ENCODE measurements at regions of chr17 and their contacts with region 1.

Region 1: GRCh38 chr17:43683928-43684653 is 22.4 kb upstream of the MEOX1 start:
- DNase-seq: no peak
- ATAC-seq: no peak
- H3K4me3 Mint-ChIP-seq: no peak overlapping the region
- H3K27ac Mint-ChIP-seq: no peak overlapping the region
- H3K4me1 Mint-ChIP-seq: no peaks in the 10 kb centered on the region
- H3K27me3 Mint-ChIP-seq: peaks cover 4% of the 10 kb centered on the region

Region 2: DNA sequence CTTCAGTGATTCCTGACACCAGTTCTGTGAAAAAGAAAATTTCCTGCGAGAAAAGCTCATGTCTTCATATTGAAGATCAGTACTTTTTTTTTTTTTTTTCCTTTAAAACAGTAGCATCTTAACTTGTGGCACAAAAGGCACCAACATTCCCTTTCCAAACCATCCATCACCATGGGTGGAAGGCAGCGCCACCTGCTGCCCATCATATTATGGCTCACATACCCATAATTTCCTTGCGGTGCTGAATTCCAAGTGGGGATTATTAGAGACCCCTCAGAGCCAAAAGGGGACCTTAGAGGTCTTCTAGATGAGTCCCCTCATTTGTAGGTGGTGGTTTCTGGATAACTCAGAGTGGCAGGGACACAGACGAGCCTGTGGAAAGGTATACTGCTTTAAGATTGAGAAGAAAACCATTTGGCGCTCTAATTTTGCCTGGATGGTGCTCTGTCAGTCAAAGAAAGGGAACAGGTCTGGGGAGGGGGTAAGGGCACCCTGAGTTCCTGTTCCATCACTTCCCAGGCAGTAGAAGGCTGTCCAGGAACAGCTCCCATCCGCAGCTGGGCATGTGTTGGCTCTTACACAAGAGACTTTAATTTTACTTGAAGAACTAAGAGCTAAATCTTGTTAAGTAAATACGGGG is 82.4 kb after region 1 on chr17:
- CTCF ChIA-PET with region 1: interaction called, 12 read pairs
- POLR2A ChIA-PET with region 1: interaction called, 5 read pairs
- intact Hi-C with region 1: no loop called
- DNase-seq: peak; percentile 73
- ATAC-seq: no peak
- H3K4me3 Mint-ChIP-seq: no peak overlapping the region
- H3K27ac Mint-ChIP-seq: no peak overlapping the region
- H3K4me1 Mint-ChIP-seq: no peaks in the 10 kb centered on the region
- H3K27me3 Mint-ChIP-seq: no peaks in the 10 kb centered on the region

Region 3: DNA sequence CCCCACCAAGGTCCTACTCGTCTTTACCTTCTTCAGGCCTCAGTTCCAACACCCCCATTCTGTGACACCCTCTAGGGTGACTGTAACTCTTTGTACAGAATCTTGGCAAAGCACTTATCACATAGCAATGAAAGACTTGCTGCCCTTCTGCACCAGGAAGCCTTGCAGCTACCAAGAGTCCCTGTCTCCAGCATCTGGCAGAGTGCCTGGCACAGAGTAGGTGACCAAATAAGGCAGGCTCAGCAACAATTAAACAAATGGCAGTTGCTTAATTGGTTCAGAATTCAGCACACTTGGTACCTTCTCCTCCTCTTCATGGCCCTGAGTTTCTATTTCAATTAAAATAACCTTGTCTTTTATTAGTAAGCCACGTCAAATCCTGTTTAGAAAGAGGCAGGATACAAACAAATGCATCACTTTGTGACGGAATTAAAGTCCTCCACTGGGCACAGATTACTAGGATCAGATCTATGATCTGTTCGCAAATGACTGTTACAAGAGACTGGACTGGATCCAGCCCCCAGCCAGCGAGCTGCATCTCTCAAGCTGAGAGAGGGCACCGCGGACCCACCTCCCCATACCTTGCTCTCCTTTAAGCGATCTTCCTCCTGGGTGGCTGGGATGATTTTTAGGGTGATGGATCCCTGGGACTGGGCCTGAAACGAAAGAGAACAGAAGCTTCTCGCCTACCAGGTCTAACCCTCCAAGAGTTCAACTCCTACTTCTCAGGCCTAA is 139.4 kb after region 1 on chr17:
- CTCF ChIA-PET with region 1: no interaction called
- POLR2A ChIA-PET with region 1: no interaction called
- intact Hi-C with region 1: no loop called
- DNase-seq: no peak
- ATAC-seq: no peak
- H3K4me3 Mint-ChIP-seq: no peak overlapping the region
- H3K27ac Mint-ChIP-seq: no peak overlapping the region
- H3K4me1 Mint-ChIP-seq: no peaks in the 10 kb centered on the region
- H3K27me3 Mint-ChIP-seq: no peaks in the 10 kb centered on the region